Heart right ventricle (tissue), 16 donors: ENCODE measurements at regions of chrX and their contacts with region 1.

Region 1: DNA sequence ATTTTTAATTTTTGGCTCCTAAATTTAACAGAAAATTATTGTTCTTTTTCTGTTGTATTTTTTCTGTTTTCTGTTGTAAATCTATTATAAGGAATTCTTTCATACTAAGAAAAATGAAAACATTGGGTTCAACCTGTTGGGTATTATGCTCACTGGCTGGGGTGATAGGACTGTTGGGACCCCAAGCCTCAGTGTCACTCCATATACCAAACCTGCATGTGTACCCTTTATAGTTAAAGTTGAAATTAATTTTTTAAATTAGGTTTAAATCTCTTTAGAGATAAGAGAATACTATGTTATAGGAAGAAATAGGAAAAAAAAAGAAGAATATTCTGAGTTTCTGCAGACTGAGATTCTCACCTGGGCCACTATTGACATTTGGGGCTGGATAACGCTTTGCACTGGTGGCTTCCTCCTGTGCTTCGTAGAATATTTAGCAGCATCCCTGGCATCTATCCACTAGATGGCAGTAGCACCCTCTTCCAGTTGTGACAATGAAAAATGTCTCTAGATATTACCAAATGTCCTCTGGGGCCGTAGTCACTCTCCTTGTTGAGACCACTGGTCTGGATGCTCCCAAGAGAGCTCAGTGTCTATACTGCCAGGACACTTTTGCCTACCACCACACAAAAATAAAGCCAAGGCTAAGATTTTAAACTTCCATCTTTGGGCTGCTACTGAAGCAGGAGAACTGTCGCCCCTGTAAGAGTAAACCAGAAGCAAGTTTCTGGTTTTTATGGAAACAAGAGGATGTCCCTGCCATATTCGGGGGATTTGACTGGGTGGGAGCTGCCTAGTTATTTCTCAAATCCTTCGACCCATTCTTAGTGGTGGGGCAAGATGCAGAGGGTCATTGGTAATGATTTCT is 22.4 kb upstream of the CLTRN start:
- DNase-seq: peak in 1 of 2 donors; percentile 39
- ATAC-seq: peak; percentile 46 to 79 (median 68)
- H3K4me3 ChIP-seq: no peak overlapping the region
- H3K27ac ChIP-seq: no peak overlapping the region
- H3K4me1 ChIP-seq: peaks cover 0 to 10% (median 0%) of the 10 kb centered on the region in 9 donors
- H3K27me3 ChIP-seq: no peaks in the 10 kb centered on the region
- CTCF ChIP-seq: peak; percentile 31 to 86 (median 68)

Region 2: DNA sequence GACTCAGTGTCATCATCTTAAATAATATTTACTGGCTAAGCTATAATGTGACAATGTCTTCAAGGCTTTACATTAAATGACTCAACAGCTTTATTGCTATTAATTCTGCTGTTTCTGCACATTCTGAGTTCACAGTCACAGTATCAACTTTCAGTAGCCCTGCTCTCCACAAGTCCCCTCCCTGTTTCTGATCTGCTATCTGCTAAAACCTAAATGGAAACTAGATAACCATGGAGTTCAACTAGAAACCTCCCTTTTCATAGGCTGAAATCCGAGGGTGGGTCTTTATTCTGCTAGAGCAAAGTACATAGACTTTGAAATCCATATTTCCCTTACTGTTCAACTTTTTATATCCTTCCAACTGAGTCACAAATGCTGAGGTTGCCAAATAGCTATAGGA is 80.9 kb before region 1 on chrX:
- intact Hi-C with region 1: no loop called
- DNase-seq: no peak
- ATAC-seq: no peak
- H3K4me3 ChIP-seq: peak overlapping the region in 7 of 10 donors; percentile 0 to 42 (median 40)
- H3K27ac ChIP-seq: peak overlapping the region in 5 of 10 donors; percentile 56 to 71 (median 70)
- H3K4me1 ChIP-seq: no peaks in the 10 kb centered on the region
- H3K27me3 ChIP-seq: peaks cover 0 to 69% (median 0%) of the 10 kb centered on the region in 7 donors
- CTCF ChIP-seq: no peak

Region 3: GRCh38 chrX:15737960-15738902 is 51.2 kb after region 1 on chrX and contains the start of gene CA5B:
- intact Hi-C with region 1: loop called in 2 of 10 experiments (anchors 5 to 10 kb)
- DNase-seq: peak; percentile 91 to 94
- ATAC-seq: peak; percentile 97 to 100 (median 99)
- H3K4me3 ChIP-seq: peak within 1 kb of the TSS; percentile 18 to 67 (median 60)
- H3K27ac ChIP-seq: peak within 1 kb of the TSS in 6 of 10 donors; percentile 30 to 63 (median 46)
- H3K4me1 ChIP-seq: peaks cover 0 to 18% (median 3%) of the 10 kb centered on the region in 9 donors
- H3K27me3 ChIP-seq: peaks cover 0 to 17% (median 0%) of the 10 kb centered on the region in 7 donors
- CTCF ChIP-seq: no peak
- total RNA-seq, gene CA5B: 2.4 to 4.9 (median 3.3) TPM

Region 4: DNA sequence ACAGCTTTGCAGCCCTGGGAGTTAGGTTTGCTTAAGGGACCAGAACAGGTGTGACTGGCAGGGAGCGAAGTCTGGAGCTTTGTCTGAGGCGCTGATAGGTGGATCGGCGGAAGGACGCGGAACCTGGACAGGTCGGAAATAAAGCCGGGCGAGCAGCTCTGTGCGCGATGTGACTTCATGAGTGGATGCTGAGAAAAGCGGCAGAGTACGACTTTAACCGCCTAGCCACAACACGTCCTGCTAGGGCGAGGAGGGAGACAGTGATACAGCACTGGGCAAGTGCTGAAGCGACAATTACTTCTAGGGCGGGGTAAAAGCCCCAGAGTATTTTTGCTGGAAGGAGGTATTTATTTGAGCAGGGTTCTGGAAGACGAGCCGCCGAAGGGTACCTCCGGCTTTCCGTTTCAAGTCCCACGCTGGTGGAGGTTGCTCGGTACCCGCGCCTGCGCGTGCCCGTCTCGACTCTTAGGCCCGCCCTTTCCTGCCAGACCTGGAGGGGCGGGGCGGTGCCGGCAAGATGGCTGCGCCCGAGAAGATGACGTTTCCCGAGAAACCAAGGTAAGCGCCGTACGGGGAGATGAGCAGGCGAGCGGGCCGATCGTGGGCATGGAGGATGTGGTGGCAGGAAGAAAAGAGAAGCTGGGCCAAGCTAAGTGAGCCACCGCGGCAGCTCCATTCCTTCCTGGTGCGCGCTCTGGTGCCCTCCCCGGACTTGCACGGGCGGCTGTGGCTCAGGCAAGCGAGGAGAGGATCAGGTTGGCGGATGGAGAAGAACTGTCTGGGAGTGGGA is 103.1 kb after region 1 on chrX and contains the start of gene ZRSR2:
- intact Hi-C with region 1: loop called in 1 of 10 experiments (anchors 10 kb)
- DNase-seq: peak; percentile 77 to 78
- ATAC-seq: peak; percentile 97 to 99 (median 98)
- H3K4me3 ChIP-seq: peak within 1 kb of the TSS; percentile 48 to 86 (median 75)
- H3K27ac ChIP-seq: peak within 1 kb of the TSS in 9 of 10 donors; percentile 59 to 92 (median 79)
- H3K4me1 ChIP-seq: peaks cover 0 to 30% (median 9%) of the 10 kb centered on the region in 9 donors
- H3K27me3 ChIP-seq: no peaks in the 10 kb centered on the region
- CTCF ChIP-seq: peak in 1 of 9 donors; percentile 9
- total RNA-seq, gene ZRSR2: 6.3 to 9.9 (median 7.4) TPM

Region 5: GRCh38 chrX:15973299-15973698 is 286.2 kb after region 1 on chrX:
- intact Hi-C with region 1: loop called in 1 of 10 experiments (anchors 10 kb)
- DNase-seq: peak in 1 of 2 donors; percentile 29
- ATAC-seq: peak in 7 of 8 donors; percentile 55 to 89 (median 77)
- H3K4me3 ChIP-seq: no peak overlapping the region
- H3K27ac ChIP-seq: no peak overlapping the region
- H3K4me1 ChIP-seq: peaks cover 0 to 20% (median 0%) of the 10 kb centered on the region in 9 donors
- H3K27me3 ChIP-seq: peaks cover 0 to 50% (median 0%) of the 10 kb centered on the region in 7 donors
- CTCF ChIP-seq: peak in 8 of 9 donors; percentile 19 to 63 (median 49)

Region 6: GRCh38 chrX:16386126-16386525 is 699.1 kb after region 1 on chrX:
- intact Hi-C with region 1: no loop called
- DNase-seq: no peak
- ATAC-seq: no peak
- H3K4me3 ChIP-seq: no peak overlapping the region
- H3K27ac ChIP-seq: no peak overlapping the region
- H3K4me1 ChIP-seq: no peaks in the 10 kb centered on the region
- H3K27me3 ChIP-seq: peaks cover 0 to 31% (median 0%) of the 10 kb centered on the region in 7 donors
- CTCF ChIP-seq: no peak

Region 7: GRCh38 chrX:16695079-16695676 is 1008.1 kb after region 1 on chrX:
- intact Hi-C with region 1: loop called in 1 of 10 experiments (anchors 10 kb)
- DNase-seq: peak; percentile 27 to 28
- ATAC-seq: peak in 4 of 8 donors; percentile 28 to 66 (median 36)
- H3K4me3 ChIP-seq: no peak overlapping the region
- H3K27ac ChIP-seq: no peak overlapping the region
- H3K4me1 ChIP-seq: no peaks in the 10 kb centered on the region
- H3K27me3 ChIP-seq: peaks cover 0 to 20% (median 0%) of the 10 kb centered on the region in 7 donors
- CTCF ChIP-seq: peak; percentile 47 to 92 (median 74)